Breast epithelium (tissue), 4 donors: ENCODE measurements at regions of chr3 and their contacts with region 1.

Region 1: DNA sequence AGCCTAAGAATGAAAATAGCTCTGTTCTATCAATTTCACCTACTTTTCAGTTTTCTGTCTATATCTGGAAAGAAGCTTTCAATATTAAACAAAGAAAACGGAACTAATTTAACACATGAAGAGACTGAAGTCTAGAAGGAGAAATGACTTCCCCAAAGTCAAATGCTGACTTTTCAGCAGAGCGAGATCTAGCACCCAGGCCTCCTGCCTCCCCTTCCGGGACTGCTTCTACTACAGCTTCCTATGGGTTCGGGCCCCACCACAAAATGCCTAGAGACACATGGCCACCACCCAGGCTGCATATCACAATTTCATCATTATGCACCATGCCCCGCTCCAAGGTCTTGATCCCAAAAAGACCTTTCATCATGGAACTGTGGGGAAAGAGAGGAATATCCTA is 104.5 kb downstream of the SST start:
- DNase-seq: no peak
- H3K4me3 ChIP-seq: no peak overlapping the region
- H3K27ac ChIP-seq: no peak overlapping the region
- H3K4me1 ChIP-seq: peaks cover 0 to 8% of the 10 kb centered on the region in 2 donors
- H3K27me3 ChIP-seq: no peaks in the 10 kb centered on the region
- CTCF ChIP-seq: no peak
- POLR2A ChIP-seq: no peak

Region 2: GRCh38 chr3:186871403-186871924 is 694.2 kb before region 1 on chr3:
- intact Hi-C with region 1: no loop called
- DNase-seq: no peak
- H3K4me3 ChIP-seq: no peak overlapping the region
- H3K27ac ChIP-seq: peak overlapping the region in 1 of 2 donors; percentile 8
- H3K4me1 ChIP-seq: no peaks in the 10 kb centered on the region
- H3K27me3 ChIP-seq: no peaks in the 10 kb centered on the region
- CTCF ChIP-seq: no peak
- POLR2A ChIP-seq: no peak

Region 3: DNA sequence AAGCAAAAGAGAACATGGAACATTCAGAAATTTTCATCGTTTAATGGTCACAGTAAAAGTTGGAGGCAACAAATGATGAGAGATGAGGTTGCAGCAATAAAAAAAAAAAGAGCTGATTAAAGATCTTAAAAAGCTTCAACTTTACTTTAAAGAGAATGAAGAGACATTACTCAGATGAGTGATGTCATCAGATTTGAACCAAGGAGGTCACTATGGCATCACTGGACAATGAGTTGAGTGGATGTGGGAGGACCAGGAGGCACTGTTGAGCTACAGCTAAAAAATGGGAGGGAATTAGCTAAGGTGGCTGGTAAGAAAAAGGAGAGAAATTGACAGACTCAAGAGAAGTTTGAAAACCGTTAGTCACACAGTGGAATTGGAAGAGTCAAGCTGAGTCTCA is 33.9 kb before region 1 on chr3:
- intact Hi-C with region 1: no loop called
- DNase-seq: no peak
- H3K4me3 ChIP-seq: no peak overlapping the region
- H3K27ac ChIP-seq: no peak overlapping the region
- H3K4me1 ChIP-seq: no peaks in the 10 kb centered on the region
- H3K27me3 ChIP-seq: no peaks in the 10 kb centered on the region
- CTCF ChIP-seq: no peak
- POLR2A ChIP-seq: no peak

Region 4: DNA sequence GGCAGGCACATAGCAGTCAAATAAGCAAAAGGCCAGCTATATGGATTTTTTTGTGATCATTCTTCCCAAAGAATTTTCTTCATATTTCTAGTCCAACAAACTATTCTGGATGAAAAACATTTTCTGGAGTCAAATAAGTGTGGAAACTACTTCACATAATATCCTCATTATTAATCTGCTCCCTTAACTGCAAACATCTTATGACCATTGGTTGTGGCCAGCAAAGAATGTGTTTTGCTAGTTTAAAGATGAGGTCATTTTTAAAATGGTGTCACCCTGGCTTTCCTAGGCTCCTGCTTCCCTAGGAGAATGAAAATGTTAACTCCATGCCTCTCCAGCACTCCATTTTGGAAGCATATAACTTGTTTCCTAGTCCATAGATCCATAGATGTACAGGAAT is 14.3 kb before region 1 on chr3:
- intact Hi-C with region 1: loop called (anchors 1 kb)
- DNase-seq: no peak
- H3K4me3 ChIP-seq: no peak overlapping the region
- H3K27ac ChIP-seq: no peak overlapping the region
- H3K4me1 ChIP-seq: no peaks in the 10 kb centered on the region
- H3K27me3 ChIP-seq: no peaks in the 10 kb centered on the region
- CTCF ChIP-seq: no peak
- POLR2A ChIP-seq: no peak

Region 5: GRCh38 chr3:187587076-187587475 is 21.4 kb after region 1 on chr3:
- intact Hi-C with region 1: no loop called
- DNase-seq: no peak
- H3K4me3 ChIP-seq: no peak overlapping the region
- H3K27ac ChIP-seq: no peak overlapping the region
- H3K4me1 ChIP-seq: no peaks in the 10 kb centered on the region
- H3K27me3 ChIP-seq: no peaks in the 10 kb centered on the region
- CTCF ChIP-seq: no peak
- POLR2A ChIP-seq: no peak